ENCODE measurements at regions of chr11 and their contacts with region 1.

Region 1: GRCh38 chr11:94519478-94520084 is 7.3 kb downstream of the C11orf97 start:
- DNase-seq: peak in 4 of 5 donors; percentile 16 to 34 (median 25)
- H3K4me3 ChIP-seq: no peak overlapping the region
- H3K4me3 Mint-ChIP-seq: no peak overlapping the region
- H3K27ac ChIP-seq: no peak overlapping the region
- H3K27ac Mint-ChIP-seq: no peak overlapping the region
- H3K4me1 ChIP-seq: no peaks in the 10 kb centered on the region
- H3K4me1 Mint-ChIP-seq: no peaks in the 10 kb centered on the region
- H3K27me3 ChIP-seq: no peaks in the 10 kb centered on the region
- H3K27me3 Mint-ChIP-seq: peaks cover 8 to 9% of the 10 kb centered on the region in 2 donors

Region 2: GRCh38 chr11:94211261-94211830 is 308.2 kb before region 1 on chr11:
- CTCF ChIA-PET with region 1: no interaction called
- POLR2A ChIA-PET with region 1: no interaction called
- intact Hi-C with region 1: no loop called
- DNase-seq: no peak
- H3K4me3 ChIP-seq: no peak overlapping the region
- H3K4me3 Mint-ChIP-seq: no peak overlapping the region
- H3K27ac ChIP-seq: no peak overlapping the region
- H3K27ac Mint-ChIP-seq: no peak overlapping the region
- H3K4me1 ChIP-seq: no peaks in the 10 kb centered on the region
- H3K4me1 Mint-ChIP-seq: no peaks in the 10 kb centered on the region
- H3K27me3 ChIP-seq: no peaks in the 10 kb centered on the region
- H3K27me3 Mint-ChIP-seq: peaks cover 0 to 1% of the 10 kb centered on the region in 2 donors

Region 3: DNA sequence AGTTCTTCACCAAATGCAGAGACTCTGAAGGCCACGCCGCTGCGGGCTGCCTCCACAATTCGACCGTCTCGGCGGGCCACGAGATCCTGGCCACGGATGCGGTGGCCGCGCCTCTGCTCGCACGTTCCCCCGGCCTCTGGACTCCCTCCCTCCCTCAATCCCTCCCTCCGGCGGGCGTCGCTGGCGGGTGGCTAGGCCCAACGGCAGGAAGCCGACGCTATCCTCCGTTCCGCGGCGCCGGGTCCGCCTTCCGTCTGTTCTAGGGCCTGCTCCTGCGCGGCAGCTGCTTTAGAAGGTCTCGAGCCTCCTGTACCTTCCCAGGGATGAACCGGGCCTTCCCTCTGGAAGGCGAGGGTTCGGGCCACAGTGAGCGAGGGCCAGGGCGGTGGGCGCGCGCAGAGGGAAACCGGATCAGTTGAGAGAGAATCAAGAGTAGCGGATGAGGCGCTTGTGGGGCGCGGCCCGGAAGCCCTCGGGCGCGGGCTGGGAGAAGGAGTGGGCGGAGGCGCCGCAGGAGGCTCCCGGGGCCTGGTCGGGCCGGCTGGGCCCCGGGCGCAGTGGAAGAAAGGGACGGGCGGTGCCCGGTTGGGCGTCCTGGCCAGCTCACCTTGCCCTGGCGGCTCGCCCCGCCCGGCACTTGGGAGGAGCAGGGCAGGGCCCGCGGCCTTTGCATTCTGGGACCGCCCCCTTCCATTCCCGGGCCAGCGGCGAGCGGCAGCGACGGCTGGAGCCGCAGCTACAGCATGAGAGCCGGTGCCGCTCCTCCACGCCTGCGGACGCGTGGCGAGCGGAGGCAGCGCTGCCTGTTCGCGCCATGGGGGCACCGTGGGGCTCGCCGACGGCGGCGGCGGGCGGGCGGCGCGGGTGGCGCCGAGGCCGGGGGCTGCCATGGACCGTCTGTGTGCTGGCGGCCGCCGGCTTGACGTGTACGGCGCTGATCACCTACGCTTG is 24.4 kb after region 1 on chr11 and contains the start of gene FUT4:
- CTCF ChIA-PET with region 1: interaction called, 3 read pairs
- POLR2A ChIA-PET with region 1: no interaction called
- intact Hi-C with region 1: loop called (anchors 2 kb)
- DNase-seq: peak; percentile 66 to 77 (median 74)
- H3K4me3 ChIP-seq: peak within 1 kb of the TSS in 1 of 2 donors; percentile 70
- H3K4me3 Mint-ChIP-seq: peak within 1 kb of the TSS; percentile 97 to 100 (median 99)
- H3K27ac ChIP-seq: peak within 1 kb of the TSS; percentile 83
- H3K27ac Mint-ChIP-seq: peak within 1 kb of the TSS; percentile 91 to 100 (median 99)
- H3K4me1 ChIP-seq: peaks cover 44% of the 10 kb centered on the region
- H3K4me1 Mint-ChIP-seq: peaks cover 25 to 41% (median 35%) of the 10 kb centered on the region in 4 donors
- H3K27me3 ChIP-seq: no peaks in the 10 kb centered on the region
- H3K27me3 Mint-ChIP-seq: no peaks in the 10 kb centered on the region
- total RNA-seq, gene FUT4: 6.7 to 7.4 TPM

Region 4: GRCh38 chr11:94602430-94603372 is 83.1 kb after region 1 on chr11:
- CTCF ChIA-PET with region 1: interaction called, 10 read pairs
- POLR2A ChIA-PET with region 1: no interaction called
- intact Hi-C with region 1: loop called (anchors 1 kb)
- DNase-seq: peak in 2 of 5 donors; percentile 4 to 8
- H3K4me3 ChIP-seq: no peak overlapping the region
- H3K4me3 Mint-ChIP-seq: no peak overlapping the region
- H3K27ac ChIP-seq: no peak overlapping the region
- H3K27ac Mint-ChIP-seq: no peak overlapping the region
- H3K4me1 ChIP-seq: no peaks in the 10 kb centered on the region
- H3K4me1 Mint-ChIP-seq: no peaks in the 10 kb centered on the region
- H3K27me3 ChIP-seq: no peaks in the 10 kb centered on the region
- H3K27me3 Mint-ChIP-seq: no peaks in the 10 kb centered on the region

Region 5: DNA sequence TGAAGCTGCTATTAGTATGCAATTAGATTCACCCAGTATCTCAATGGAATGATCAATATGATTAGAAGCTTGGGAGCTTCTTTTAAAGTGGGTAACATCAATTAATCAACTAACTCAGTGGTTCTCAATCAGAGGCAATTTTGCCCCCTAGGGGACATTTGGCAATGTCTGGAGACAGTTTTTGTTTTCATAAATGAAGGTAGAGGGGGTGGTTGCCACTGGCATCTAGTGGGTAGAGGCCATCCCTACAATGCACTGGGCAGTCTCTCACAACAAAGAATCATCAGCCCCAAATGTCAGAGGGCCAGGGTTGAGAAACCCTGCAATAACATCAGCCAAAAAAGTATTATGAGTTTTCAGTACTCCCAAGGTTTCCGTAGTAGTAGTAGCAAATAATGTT is 242.6 kb after region 1 on chr11:
- CTCF ChIA-PET with region 1: no interaction called
- POLR2A ChIA-PET with region 1: no interaction called
- intact Hi-C with region 1: loop called (anchors 5 kb)
- DNase-seq: no peak
- H3K4me3 ChIP-seq: no peak overlapping the region
- H3K4me3 Mint-ChIP-seq: no peak overlapping the region
- H3K27ac ChIP-seq: no peak overlapping the region
- H3K27ac Mint-ChIP-seq: no peak overlapping the region
- H3K4me1 ChIP-seq: no peaks in the 10 kb centered on the region
- H3K4me1 Mint-ChIP-seq: no peaks in the 10 kb centered on the region
- H3K27me3 ChIP-seq: peaks cover 6% of the 10 kb centered on the region
- H3K27me3 Mint-ChIP-seq: peaks cover 7 to 10% of the 10 kb centered on the region in 2 donors

Region 6: GRCh38 chr11:95352733-95353346 is 833.3 kb after region 1 on chr11:
- CTCF ChIA-PET with region 1: no interaction called
- POLR2A ChIA-PET with region 1: no interaction called
- intact Hi-C with region 1: no loop called
- DNase-seq: no peak
- H3K4me3 ChIP-seq: no peak overlapping the region
- H3K4me3 Mint-ChIP-seq: no peak overlapping the region
- H3K27ac ChIP-seq: no peak overlapping the region
- H3K27ac Mint-ChIP-seq: peak overlapping the region in 1 of 7 donors; percentile 9
- H3K4me1 ChIP-seq: no peaks in the 10 kb centered on the region
- H3K4me1 Mint-ChIP-seq: no peaks in the 10 kb centered on the region
- H3K27me3 ChIP-seq: no peaks in the 10 kb centered on the region
- H3K27me3 Mint-ChIP-seq: peaks cover 0 to 2% of the 10 kb centered on the region in 2 donors

Measured in CD4-positive, alpha-beta memory T cell (primary cell).